ENCODE measurements at regions of chr11 and their contacts with region 1.

Region 1: DNA sequence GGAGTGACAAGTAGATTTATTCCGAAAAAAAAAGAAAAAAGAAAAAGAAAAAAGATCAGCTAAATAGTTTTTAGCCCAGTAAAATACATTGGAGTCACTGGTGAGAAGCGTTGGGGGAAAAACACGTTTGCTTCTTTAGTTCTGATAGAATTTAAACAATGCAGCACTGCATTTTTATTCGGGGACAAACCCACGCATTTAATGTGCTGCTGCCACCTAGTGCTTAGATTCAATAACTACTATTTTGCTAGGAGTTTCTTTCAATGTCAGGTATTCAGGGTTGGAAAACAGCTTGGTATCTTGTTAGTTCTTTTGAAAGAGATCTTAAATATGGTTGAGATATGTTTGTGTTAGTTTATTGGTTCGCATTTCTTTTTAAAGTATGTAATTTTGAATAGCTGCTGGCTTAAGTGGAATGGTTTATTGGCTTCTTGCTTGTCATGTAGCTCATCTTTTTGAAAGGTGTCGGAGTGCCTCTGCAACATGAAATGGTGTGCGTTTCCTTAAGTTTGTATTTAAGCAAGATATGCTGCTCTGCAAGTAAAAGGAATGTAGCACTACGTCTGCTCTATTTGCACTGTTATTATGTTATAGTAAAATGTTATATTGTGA is 41.9 kb downstream of the SVIP start:
- H3K4me3 ChIP-seq: no peak overlapping the region
- H3K27ac ChIP-seq: no peak overlapping the region
- H3K4me1 ChIP-seq: no peaks in the 10 kb centered on the region
- CTCF ChIP-seq: no peak

Region 2: GRCh38 chr11:22337596-22338485 is 449.8 kb before region 1 on chr11 and contains the start of gene SLC17A6:
- CTCF ChIA-PET with region 1: interaction called, 19 read pairs
- POLR2A ChIA-PET with region 1: no interaction called
- H3K4me3 ChIP-seq: no peak within 1 kb of the TSS
- H3K27ac ChIP-seq: no peak within 1 kb of the TSS
- H3K4me1 ChIP-seq: no peaks in the 10 kb centered on the region
- CTCF ChIP-seq: no peak

Region 3: GRCh38 chr11:22670830-22671229 is 116.8 kb before region 1 on chr11:
- CTCF ChIA-PET with region 1: interaction called, 51 read pairs
- POLR2A ChIA-PET with region 1: no interaction called
- H3K4me3 ChIP-seq: no peak overlapping the region
- H3K27ac ChIP-seq: no peak overlapping the region
- H3K4me1 ChIP-seq: no peaks in the 10 kb centered on the region
- CTCF ChIP-seq: no peak

Region 4: DNA sequence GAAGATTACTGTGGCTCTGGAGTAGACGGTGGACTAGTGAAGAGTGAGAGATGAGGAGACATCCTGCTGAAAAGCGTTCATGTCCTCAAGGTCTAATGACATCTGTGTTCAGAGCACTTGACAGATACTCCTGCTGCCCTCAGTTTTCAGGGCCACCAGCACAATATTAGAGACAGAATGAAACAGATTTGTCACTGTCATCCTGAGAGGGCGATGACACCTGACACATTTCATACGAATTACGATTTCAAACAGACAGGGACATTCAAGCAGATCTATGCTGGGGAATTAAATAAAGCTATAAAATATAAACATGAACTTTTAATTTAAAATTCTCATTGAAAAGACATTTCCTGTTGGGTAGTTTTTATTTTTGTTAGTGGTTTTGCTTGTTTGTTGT is 12.8 kb after region 1 on chr11:
- CTCF ChIA-PET with region 1: interaction called, 13 read pairs
- POLR2A ChIA-PET with region 1: no interaction called
- H3K4me3 ChIP-seq: no peak overlapping the region
- H3K27ac ChIP-seq: no peak overlapping the region
- H3K4me1 ChIP-seq: no peaks in the 10 kb centered on the region
- CTCF ChIP-seq: no peak

Region 5: DNA sequence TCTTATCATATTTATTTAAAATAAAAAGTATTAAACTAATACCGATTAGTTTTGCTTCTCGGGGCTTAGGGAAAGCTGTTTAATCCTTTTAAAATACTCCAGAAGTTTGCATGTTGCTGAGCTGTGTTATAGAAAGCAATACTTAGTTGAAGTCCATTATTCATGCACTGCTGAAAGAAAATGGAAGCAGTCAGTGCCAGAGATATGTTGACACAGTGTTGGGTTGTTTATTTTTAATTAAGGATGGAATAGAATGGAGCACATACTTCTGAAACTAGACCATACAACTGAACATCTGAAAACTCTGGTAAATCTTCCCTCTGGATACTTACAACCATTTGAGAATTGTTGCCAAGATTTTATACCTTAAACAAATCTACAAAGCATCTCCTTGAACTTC is 355.4 kb after region 1 on chr11:
- CTCF ChIA-PET with region 1: no interaction called
- POLR2A ChIA-PET with region 1: no interaction called
- H3K4me3 ChIP-seq: no peak overlapping the region
- H3K27ac ChIP-seq: no peak overlapping the region
- H3K4me1 ChIP-seq: no peaks in the 10 kb centered on the region
- CTCF ChIP-seq: no peak

Measured in HEK293 (cell line).